Calu3 (cell line): ENCODE measurements at regions of chr10 and their contacts with region 1.

Region 1: GRCh38 chr10:110893559-110894179 is 21.9 kb downstream of the PDCD4 start:
- DNase-seq: no peak
- H3K4me3 Mint-ChIP-seq: no peak overlapping the region
- H3K27ac Mint-ChIP-seq: no peak overlapping the region
- H3K4me1 Mint-ChIP-seq: no peaks in the 10 kb centered on the region
- H3K27me3 Mint-ChIP-seq: no peaks in the 10 kb centered on the region
- CTCF ChIP-seq: no peak

Region 2: GRCh38 chr10:110746254-110746826 is 147.3 kb before region 1 on chr10:
- CTCF ChIA-PET with region 1: interaction called, 15 read pairs
- intact Hi-C with region 1: loop called (anchors 1 kb)
- DNase-seq: peak; percentile 64
- H3K4me3 Mint-ChIP-seq: no peak overlapping the region
- H3K27ac Mint-ChIP-seq: no peak overlapping the region
- H3K4me1 Mint-ChIP-seq: no peaks in the 10 kb centered on the region
- H3K27me3 Mint-ChIP-seq: peaks cover 27% of the 10 kb centered on the region
- CTCF ChIP-seq: peak; percentile 55

Region 3: DNA sequence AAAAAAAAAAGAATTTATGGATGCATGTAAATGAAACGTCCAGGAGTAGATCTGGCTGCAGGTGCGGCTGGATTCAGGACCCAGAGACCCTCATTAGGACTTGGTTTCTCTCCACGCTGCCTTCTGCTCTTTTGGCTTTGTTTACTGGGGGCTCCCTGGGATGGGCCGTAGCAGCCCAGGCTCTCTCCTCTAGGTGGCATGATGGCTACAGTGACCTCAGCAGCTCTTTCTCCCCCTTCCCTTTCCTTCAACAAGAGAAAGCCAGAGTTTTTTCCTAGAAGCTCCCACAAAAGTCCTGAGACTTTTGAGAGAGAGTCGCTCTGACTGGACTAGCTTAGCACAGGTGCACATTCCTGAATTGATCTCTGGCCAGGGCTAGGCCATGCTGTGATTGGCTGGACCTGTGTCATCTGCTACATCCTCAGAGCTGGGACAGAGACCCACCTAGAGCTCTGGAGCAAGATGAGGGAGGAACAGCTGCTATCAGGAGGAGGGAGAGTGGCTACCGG is 89.8 kb before region 1 on chr10:
- CTCF ChIA-PET with region 1: interaction called, 6 read pairs
- intact Hi-C with region 1: loop called (anchors 1 kb)
- DNase-seq: peak; percentile 40
- H3K4me3 Mint-ChIP-seq: no peak overlapping the region
- H3K27ac Mint-ChIP-seq: no peak overlapping the region
- H3K4me1 Mint-ChIP-seq: peaks cover 8% of the 10 kb centered on the region
- H3K27me3 Mint-ChIP-seq: peaks cover 23% of the 10 kb centered on the region
- CTCF ChIP-seq: peak; percentile 13

Region 4: DNA sequence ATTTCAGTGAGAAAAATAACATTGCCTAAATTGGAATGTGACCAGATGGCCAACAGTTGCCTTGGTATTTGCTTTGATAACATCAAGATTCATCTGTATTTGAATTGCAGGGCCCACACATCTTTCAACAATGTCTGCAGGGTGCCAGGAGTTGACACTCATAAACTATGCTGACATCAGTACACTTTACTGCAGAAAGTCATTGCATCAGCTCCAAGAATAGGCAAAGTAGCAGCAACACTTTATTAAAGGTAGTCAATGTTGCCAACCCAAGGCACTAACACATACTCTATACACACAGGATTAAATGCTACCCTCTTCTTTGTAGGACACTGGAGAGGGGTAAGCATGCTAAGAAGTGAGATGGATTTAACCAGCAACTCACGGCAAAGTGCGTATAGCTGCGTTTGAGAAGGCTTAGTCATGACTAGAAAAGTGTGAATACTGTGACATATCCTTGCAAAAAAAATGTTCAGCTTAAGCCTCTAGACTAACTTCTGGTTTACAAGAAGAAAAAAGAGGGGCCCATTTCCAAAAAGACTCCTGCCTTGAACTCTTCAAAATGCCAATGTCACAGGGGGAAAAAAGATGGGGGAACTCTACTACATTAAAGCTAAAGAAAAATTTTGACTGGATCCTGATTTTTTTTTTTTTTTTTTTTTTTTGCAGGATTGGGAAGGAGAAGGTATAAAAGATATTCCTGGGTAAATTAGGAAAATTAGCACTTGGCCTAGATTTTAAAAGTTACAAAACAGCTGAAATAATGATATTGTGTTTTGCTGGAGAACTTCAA is 23.1 kb after region 1 on chr10:
- CTCF ChIA-PET with region 1: no interaction called
- intact Hi-C with region 1: no loop called
- DNase-seq: no peak
- H3K4me3 Mint-ChIP-seq: no peak overlapping the region
- H3K27ac Mint-ChIP-seq: no peak overlapping the region
- H3K4me1 Mint-ChIP-seq: peaks cover 8% of the 10 kb centered on the region
- H3K27me3 Mint-ChIP-seq: no peaks in the 10 kb centered on the region
- CTCF ChIP-seq: no peak

Region 5: DNA sequence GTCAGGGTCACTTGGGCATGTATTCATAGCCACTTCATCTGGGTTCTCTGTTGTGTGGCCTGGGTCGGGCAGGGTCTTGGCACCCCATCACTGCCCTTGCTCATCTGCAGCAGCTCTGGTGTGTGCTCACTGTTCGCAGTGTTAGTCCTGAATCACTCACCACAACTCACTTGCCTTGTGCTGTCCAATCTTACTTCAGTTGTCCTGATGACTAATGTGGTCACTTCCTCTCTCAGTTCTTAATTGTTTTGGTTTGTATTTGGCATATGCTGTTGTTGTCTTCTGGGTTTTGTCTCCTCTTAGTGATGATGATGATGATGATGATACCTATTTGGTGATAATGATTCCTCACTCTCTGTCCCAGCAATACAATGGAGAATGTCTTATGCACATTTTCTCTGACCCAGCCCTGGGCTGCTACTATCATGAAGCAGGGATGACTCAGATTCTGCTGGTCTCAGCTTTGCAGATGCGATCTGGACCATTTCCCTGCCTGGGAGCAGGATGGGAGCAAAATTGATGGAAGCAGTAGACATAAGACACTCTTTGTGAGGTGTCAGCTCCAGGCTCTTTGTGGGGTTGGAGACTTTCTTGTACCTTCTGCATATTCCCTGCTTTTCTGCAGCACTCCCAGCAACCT is 200.2 kb after region 1 on chr10:
- CTCF ChIA-PET with region 1: no interaction called
- intact Hi-C with region 1: no loop called
- DNase-seq: no peak
- H3K4me3 Mint-ChIP-seq: no peak overlapping the region
- H3K27ac Mint-ChIP-seq: no peak overlapping the region
- H3K4me1 Mint-ChIP-seq: peaks cover 9% of the 10 kb centered on the region
- H3K27me3 Mint-ChIP-seq: no peaks in the 10 kb centered on the region
- CTCF ChIP-seq: no peak